Activated naive CD4-positive, alpha-beta T cell treated with anti-CD3 and anti-CD28 coated beads, Interleukin-2, amount 10 ng/mL, durations not matched to agents 7 days and 5 days (primary cell): ENCODE measurements at regions of chr6 and their contacts with region 1.

Region 1: DNA sequence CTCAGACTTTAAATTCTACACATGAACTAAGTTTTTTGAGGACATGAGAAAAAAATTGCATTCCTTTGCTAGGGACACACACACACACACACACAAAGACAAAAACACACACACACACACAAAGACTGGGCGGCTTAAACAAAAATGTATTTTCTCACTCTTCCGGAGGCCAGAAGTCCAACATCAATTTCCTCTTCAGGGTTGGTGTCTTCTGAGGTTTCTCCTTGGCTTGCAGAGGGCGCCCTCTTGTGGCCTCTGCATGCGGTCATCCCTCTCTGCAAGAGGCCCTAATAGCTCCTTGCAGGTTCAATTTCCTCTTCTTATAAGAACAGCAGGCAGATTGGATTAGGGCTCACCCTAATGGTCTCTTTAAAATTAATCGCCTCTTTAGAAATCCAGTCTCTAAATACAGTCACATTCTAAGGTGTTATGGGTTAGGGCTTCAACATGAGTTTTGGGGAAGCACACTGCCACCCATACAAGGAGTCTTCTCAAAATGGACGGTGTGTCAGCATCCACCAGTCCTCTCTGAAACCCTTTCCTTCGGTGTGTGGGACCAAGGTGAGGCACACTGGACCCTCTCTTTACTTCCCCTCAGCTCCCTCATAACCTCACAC is 61.4 kb downstream of the GPR6 start:
- DNase-seq: peak; percentile 88
- H3K4me3 Mint-ChIP-seq: peak overlapping the region; percentile 78
- H3K27ac Mint-ChIP-seq: peak overlapping the region; percentile 91
- H3K4me1 Mint-ChIP-seq: peaks cover 20% of the 10 kb centered on the region
- H3K27me3 Mint-ChIP-seq: peaks cover 7% of the 10 kb centered on the region

Region 2: DNA sequence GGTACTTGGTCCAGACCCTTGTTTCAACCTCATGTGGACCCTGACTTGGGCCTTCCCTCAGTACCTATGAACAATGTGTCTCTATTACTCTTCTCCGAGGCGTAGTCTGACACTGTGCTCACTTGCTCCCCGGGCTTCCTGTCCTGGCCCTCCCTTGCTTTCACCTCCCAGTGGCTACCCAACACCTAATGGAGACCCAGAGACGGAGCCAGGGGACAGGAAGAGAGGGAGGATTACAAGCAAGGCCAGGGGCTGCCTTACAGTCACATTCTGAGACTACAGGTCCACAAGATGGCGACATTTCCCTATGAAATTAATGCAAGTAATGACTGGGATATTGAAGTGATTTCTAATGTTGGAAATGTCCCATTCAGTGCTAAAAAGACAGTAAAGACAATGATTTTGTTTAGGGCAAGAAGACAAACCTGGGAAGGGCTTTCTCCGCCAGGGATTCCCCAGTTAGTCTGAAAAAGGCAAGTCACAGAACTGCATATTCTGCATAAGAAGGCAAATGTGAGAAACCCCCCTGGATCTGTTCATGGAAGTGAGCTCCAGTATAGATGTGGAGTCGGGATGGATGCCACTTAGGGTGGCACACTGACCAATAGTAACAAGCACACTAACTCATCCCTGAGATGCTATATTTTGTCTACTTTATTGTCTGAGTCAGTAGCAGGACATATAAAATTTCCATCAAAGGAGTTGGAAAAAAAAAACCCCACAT is 512.4 kb before region 1 on chr6:
- CTCF ChIA-PET with region 1: interaction called, 39 read pairs
- DNase-seq: peak; percentile 63
- H3K4me3 Mint-ChIP-seq: no peak overlapping the region
- H3K27ac Mint-ChIP-seq: no peak overlapping the region
- H3K4me1 Mint-ChIP-seq: peaks cover 2% of the 10 kb centered on the region
- H3K27me3 Mint-ChIP-seq: peaks cover 6% of the 10 kb centered on the region

Region 3: DNA sequence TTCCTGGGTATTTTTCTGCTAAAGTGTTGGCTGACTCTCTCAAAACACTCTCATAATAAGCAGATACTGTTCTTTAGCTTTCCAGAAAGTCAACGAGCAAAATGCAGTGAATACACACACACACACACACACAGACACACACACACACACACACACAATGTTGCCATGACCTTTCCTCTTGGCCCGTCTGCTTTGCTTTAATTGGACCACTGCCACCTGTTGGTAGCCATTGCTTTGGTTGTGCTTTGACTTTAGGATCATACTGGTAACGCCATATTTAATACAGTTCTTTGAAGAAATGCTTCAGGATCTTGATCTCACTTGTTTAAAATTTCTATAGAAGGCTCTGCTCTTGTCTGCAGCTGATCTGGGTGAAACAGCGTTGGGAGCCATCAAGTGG is 344.0 kb before region 1 on chr6:
- CTCF ChIA-PET with region 1: interaction called, 225 read pairs
- DNase-seq: peak; percentile 31
- H3K4me3 Mint-ChIP-seq: no peak overlapping the region
- H3K27ac Mint-ChIP-seq: no peak overlapping the region
- H3K4me1 Mint-ChIP-seq: peaks cover 16% of the 10 kb centered on the region
- H3K27me3 Mint-ChIP-seq: peaks cover 4% of the 10 kb centered on the region

Region 4: DNA sequence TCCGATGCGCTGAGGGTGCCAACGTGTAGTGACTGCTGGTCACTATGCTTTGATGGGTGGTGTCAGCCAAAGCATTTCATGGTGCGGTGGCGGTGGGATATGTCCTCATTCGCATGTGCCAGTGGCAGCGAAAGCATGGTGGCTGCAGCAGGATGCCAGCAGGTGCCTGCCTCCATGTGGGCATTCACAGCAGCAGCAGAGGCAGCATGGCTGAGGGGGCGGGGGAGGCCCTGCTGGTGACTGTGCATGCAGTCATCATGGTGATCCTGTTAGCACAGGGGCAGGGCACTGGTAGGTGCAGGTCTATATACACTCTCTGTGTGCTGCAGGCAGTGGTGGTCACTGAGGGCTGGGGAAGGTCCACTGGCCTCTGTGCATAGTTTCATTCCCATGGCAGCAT is 326.4 kb before region 1 on chr6:
- CTCF ChIA-PET with region 1: interaction called, 15 read pairs
- DNase-seq: no peak
- H3K4me3 Mint-ChIP-seq: no peak overlapping the region
- H3K27ac Mint-ChIP-seq: no peak overlapping the region
- H3K4me1 Mint-ChIP-seq: no peaks in the 10 kb centered on the region
- H3K27me3 Mint-ChIP-seq: no peaks in the 10 kb centered on the region

Region 5: DNA sequence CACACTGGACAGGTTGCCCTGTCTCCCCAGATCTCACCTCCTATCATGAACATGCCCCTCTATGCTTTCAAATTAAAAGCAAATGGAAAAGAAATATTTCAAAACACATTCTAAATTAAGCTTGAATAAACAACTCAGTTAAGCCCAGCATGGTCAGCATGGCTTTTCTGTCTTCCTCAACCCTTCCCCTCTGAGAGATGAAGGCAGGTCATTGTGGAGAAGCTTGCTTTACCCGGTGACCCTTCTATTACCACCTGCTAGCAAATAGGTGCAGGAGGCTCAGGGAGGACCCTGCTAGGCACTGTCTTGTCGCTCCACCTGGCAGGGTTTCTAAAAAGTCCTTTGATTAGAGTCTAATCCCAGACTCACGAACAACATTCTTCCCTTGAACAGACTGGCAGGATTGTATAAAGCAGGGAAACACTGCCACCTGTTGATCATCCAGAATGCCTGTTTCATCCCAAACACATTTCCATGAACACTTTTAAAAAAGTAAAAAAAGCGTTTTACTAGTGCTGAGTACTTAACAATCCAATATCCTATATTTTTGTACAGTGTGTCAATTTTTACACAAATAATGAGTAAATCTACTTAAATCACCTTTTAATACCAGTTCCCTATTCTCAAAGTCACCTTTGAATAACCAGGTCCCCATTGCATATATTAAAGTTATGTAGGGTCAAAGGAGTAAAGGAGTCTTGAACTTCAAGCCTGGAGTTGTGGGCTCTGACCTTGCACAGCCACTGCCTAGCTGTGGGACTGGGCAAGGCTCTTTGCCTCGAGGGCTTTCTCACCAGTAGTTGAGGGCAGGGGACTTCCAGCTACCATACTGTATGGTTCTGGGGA is 14.1 kb after region 1 on chr6:
- CTCF ChIA-PET with region 1: interaction called, 21 read pairs
- DNase-seq: no peak
- H3K4me3 Mint-ChIP-seq: no peak overlapping the region
- H3K27ac Mint-ChIP-seq: no peak overlapping the region
- H3K4me1 Mint-ChIP-seq: no peaks in the 10 kb centered on the region
- H3K27me3 Mint-ChIP-seq: peaks cover 18% of the 10 kb centered on the region